Ascending aorta (tissue), 2 donors: ENCODE measurements at regions of chr20 and their contacts with region 1.

Region 1: GRCh38 chr20:54649511-54649962 is 174.1 kb downstream of the DOK5 start:
- DNase-seq: peak in 1 of 2 donors; percentile 79
- H3K4me3 ChIP-seq: no peak overlapping the region
- H3K27ac ChIP-seq: no peak overlapping the region
- H3K4me1 ChIP-seq: no peaks in the 10 kb centered on the region
- H3K27me3 ChIP-seq: no peaks in the 10 kb centered on the region
- CTCF ChIP-seq: peak; percentile 37 to 70 (median 63)

Region 2: GRCh38 chr20:54219751-54220426 is 429.6 kb before region 1 on chr20:
- intact Hi-C with region 1: loop called (anchors 1 kb)
- DNase-seq: no peak
- H3K4me3 ChIP-seq: no peak overlapping the region
- H3K27ac ChIP-seq: no peak overlapping the region
- H3K4me1 ChIP-seq: peaks cover 0 to 21% of the 10 kb centered on the region in 2 donors
- H3K27me3 ChIP-seq: no peaks in the 10 kb centered on the region
- CTCF ChIP-seq: peak; percentile 18 to 63 (median 53)